ENCODE measurements at regions of chr15 and their contacts with region 1.

Region 1: DNA sequence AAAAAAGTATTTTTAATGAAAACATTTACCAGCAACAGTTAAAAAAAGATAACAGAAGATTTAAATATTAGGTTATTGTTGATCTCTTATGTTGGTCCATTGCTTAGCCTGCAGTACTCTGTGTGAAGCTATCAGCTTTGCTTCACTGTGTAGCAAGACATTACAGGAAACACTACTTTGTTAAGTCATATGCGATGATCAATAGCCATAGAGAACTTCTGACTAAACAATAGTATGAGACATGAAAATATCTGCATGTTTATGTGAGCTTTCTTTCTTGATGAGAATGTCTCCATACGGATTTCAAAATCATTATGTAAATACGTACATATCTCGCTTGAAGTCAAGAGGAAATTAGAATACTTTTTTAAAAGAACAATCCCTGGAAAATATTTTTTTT is 27.0 kb upstream of the CAPN3 start:
- DNase-seq: no peak
- ATAC-seq: no peak
- H3K4me3 ChIP-seq: no peak overlapping the region
- H3K27ac ChIP-seq: no peak overlapping the region
- H3K4me1 ChIP-seq: no peaks in the 10 kb centered on the region
- H3K27me3 ChIP-seq: no peaks in the 10 kb centered on the region
- CTCF ChIP-seq: no peak

Region 2: DNA sequence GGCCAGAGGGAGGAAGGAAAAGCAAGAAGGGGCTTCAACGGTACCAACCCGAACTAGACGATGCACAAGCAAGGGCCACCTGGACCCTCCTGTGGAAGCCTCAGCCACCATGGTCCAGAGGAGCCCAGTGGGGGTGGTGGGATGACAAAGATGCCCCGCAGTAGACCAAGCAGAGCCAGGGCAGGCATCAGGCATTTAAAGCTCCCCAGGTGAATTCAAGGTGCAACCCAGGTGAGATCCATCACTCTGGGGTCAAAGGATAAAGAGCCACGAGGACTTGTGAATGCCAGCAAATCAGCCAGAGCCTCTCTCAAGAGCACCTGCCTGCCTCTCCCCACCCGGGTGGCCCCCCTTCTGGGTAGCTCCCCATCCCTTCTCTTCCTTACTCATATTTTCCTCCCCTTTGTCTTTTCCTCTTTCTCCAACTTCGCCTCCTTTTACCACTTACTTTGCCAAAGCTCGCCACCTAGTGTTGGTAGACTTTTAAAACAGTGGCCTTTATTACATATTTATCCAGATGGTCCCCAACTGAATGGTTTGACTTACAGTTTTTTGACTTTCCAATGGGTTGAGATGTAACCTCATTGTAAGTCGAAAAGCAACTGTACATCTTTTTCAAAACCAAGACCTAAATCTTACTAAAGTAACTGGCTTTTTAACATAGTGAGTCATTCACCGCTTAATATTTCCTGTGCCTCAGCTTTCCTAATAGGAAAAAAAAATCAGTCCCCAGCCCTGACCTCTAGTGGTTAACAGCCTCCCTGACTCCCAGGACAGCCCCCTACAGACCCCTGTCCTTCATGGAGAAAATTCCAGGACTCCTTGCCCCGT is 194.7 kb before region 1 on chr15:
- CTCF ChIA-PET with region 1: no interaction called
- POLR2A ChIA-PET with region 1: no interaction called
- in situ Hi-C with region 1: no loop called
- intact Hi-C with region 1: no loop called
- DNase-seq: no peak
- ATAC-seq: peak; percentile 69
- H3K4me3 ChIP-seq: no peak overlapping the region
- H3K27ac ChIP-seq: no peak overlapping the region
- H3K4me1 ChIP-seq: no peaks in the 10 kb centered on the region; the same call in 1 of the 2 replicates
- H3K27me3 ChIP-seq: no peaks in the 10 kb centered on the region
- CTCF ChIP-seq: peak; percentile 82

Region 3: DNA sequence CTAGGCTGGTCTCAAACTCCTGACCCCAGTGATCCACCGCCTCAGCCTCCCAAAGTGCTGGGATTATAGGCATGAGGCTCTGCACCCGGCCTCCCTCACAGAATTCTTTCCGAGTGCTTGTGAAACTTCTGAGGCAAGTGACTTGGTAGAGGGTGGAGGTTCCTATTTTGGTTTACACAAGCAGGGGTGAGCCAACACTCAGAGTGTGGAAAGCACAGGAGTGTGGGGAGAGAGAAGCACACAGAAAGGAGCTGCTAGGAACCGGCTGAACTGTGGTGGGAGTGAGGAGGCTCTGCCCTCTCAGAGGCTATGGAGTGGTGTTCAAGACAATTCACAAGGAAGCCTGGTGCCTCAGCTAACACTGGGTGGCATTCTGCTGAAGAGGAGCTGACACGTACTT is 34.7 kb after region 1 on chr15:
- CTCF ChIA-PET with region 1: no interaction called
- POLR2A ChIA-PET with region 1: interaction called, 15 read pairs
- in situ Hi-C with region 1: no loop called
- intact Hi-C with region 1: no loop called
- DNase-seq: no peak
- ATAC-seq: no peak
- H3K4me3 ChIP-seq: no peak overlapping the region
- H3K27ac ChIP-seq: no peak overlapping the region
- H3K4me1 ChIP-seq: no peaks in the 10 kb centered on the region
- H3K27me3 ChIP-seq: peaks cover 2% of the 10 kb centered on the region; the same call in 1 of the 2 replicates
- CTCF ChIP-seq: no peak

Region 4: GRCh38 chr15:43193710-43194109 is 861.4 kb after region 1 on chr15:
- CTCF ChIA-PET with region 1: no interaction called
- POLR2A ChIA-PET with region 1: interaction called, 17 read pairs
- in situ Hi-C with region 1: no loop called
- intact Hi-C with region 1: no loop called
- DNase-seq: no peak
- ATAC-seq: no peak
- H3K4me3 ChIP-seq: no peak overlapping the region
- H3K27ac ChIP-seq: no peak overlapping the region
- H3K4me1 ChIP-seq: no peaks in the 10 kb centered on the region
- H3K27me3 ChIP-seq: no peaks in the 10 kb centered on the region
- CTCF ChIP-seq: no peak